PC-9 (cell line): ENCODE measurements at regions of chr2 and their contacts with region 1.

Region 1: GRCh38 chr2:222976521-222977076 is 75.4 kb upstream of the KCNE4 start:
- DNase-seq: peak in 1 of 2 experiments; percentile 83
- H3K4me3 ChIP-seq: no peak overlapping the region
- H3K27ac ChIP-seq: no peak overlapping the region
- H3K4me1 ChIP-seq: peaks cover 42% of the 10 kb centered on the region
- H3K27me3 ChIP-seq: no peaks in the 10 kb centered on the region
- CTCF ChIP-seq: no peak

Region 2: GRCh38 chr2:223262946-223263345 is 286.3 kb after region 1 on chr2:
- CTCF ChIA-PET with region 1: no interaction called
- POLR2A ChIA-PET with region 1: no interaction called
- intact Hi-C with region 1: loop called (anchors 5 kb)
- DNase-seq: peak; percentile 63 to 73
- H3K4me3 ChIP-seq: no peak overlapping the region
- H3K27ac ChIP-seq: no peak overlapping the region
- H3K4me1 ChIP-seq: peaks cover 11% of the 10 kb centered on the region
- H3K27me3 ChIP-seq: no peaks in the 10 kb centered on the region
- CTCF ChIP-seq: no peak

Region 3: DNA sequence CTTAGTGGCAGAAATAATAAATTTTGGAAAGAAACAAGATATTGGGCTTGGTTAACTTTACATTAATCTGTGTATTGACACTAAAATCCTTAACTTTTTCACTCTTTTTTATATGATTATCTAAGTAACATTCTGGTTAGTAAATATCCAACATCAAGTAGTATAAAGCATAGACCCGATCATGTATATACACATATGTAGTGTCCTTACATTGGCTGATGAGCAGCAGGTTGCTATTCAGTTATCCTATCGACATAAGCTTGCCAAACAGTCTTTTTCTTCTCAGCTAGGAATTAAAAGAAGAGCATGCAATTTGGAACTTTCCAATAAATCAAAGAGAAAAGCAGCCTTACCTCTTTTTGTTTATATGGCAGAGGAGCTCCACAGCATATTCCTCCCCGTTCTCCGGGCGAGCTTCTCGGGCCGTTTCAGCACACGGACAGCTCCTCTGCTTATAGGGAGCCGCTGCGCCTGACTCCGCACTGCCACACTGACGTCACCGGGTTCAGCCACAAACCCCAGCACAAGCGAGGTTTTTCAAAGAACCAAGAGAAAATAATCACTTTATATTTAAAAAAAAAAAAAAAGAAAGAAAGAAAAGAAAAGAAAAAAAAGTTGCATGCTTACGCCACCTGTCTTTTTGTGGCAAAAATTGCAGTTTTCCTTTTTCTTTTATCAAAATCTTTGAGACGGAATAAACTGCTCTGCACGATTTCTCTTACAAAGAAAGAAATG is 625.5 kb after region 1 on chr2 and contains the start of gene SCG2:
- CTCF ChIA-PET with region 1: no interaction called
- POLR2A ChIA-PET with region 1: no interaction called
- intact Hi-C with region 1: loop called (anchors 2 kb)
- DNase-seq: peak; percentile 75 to 81
- H3K4me3 ChIP-seq: peak within 1 kb of the TSS; percentile 29; the same call in 1 of the 2 replicates
- H3K27ac ChIP-seq: no peak within 1 kb of the TSS
- H3K4me1 ChIP-seq: peaks cover 19% of the 10 kb centered on the region
- H3K27me3 ChIP-seq: no peaks in the 10 kb centered on the region
- CTCF ChIP-seq: peak; percentile 81
- total RNA-seq, gene SCG2: 0.48 and 0.81 TPM in 2 replicates

Region 4: GRCh38 chr2:223944703-223945531 is 968.3 kb after region 1 on chr2 and contains the start of gene WDFY1:
- CTCF ChIA-PET with region 1: interaction called, 4 read pairs
- POLR2A ChIA-PET with region 1: no interaction called
- intact Hi-C with region 1: loop called (anchors 5 kb)
- DNase-seq: peak; percentile 77 to 94
- H3K4me3 ChIP-seq: peak within 1 kb of the TSS; percentile 74
- H3K27ac ChIP-seq: 0 out of 2 replicates have a peak within 1 kb of the TSS, but pooled peaks have one; percentile 1
- H3K4me1 ChIP-seq: peaks cover 42% of the 10 kb centered on the region
- H3K27me3 ChIP-seq: no peaks in the 10 kb centered on the region
- CTCF ChIP-seq: no peak
- total RNA-seq, gene WDFY1: 81.9 and 84.4 TPM in 2 replicates

Region 5: DNA sequence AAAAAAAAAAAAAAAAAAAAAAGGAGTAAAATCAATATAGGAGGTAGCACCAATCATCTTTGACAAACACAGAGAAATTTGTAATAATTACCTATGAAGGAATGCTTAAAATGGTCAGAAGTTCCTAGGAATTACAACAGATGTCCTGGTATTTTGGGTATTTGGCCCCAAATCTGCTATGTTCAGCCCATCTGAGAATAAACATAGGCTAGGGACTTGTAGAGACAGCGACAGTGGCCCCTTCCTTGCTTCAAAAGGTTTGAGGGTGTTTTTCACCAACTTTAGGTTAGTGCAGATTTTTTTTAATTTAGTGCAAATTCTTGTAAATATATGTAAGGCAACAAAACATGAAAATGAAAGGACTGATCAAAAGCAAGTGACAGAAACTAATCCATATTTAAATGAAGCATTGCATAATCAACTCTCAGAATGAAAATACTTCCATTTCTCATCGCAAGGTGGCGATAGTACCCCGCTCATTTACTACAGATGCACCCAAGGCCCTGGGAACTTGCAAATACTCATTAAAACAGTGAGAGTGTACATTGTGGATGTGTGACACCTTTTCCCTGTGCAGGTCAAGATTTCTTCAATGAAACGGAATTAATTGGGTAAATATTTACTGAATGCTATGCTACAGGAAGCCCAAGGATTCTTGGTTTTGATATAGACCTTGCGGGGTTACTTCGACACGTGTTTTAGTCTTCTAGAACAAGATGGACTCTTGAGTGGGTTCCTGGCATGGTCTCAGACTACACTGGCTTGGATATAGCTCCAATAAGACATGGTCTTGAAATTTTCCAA is 1380.7 kb after region 1 on chr2:
- CTCF ChIA-PET with region 1: no interaction called
- POLR2A ChIA-PET with region 1: no interaction called
- intact Hi-C with region 1: loop called (anchors 10 kb)
- DNase-seq: peak; percentile 72 to 77
- H3K4me3 ChIP-seq: no peak overlapping the region
- H3K27ac ChIP-seq: no peak overlapping the region
- H3K4me1 ChIP-seq: peaks cover 16% of the 10 kb centered on the region
- H3K27me3 ChIP-seq: no peaks in the 10 kb centered on the region
- CTCF ChIP-seq: peak; percentile 100